Astrocyte of the cerebellum (primary cell): ENCODE measurements at regions of chr1 and their contacts with region 1.

Region 1: GRCh38 chr1:219544163-219544846 is 68.6 kb downstream of the ZC3H11B start:
- DNase-seq: no peak
- H3K4me3 ChIP-seq: no peak overlapping the region
- CTCF ChIP-seq: peak; percentile 12

Region 2: GRCh38 chr1:219385786-219386427 is 158.4 kb before region 1 on chr1:
- in situ Hi-C with region 1: loop called (anchors 10 kb)
- DNase-seq: peak; percentile 24
- H3K4me3 ChIP-seq: no peak overlapping the region
- CTCF ChIP-seq: peak; percentile 82

Region 3: GRCh38 chr1:219587805-219588561 is 43.7 kb after region 1 on chr1:
- in situ Hi-C with region 1: no loop called
- DNase-seq: no peak
- H3K4me3 ChIP-seq: no peak overlapping the region
- CTCF ChIP-seq: no peak

Region 4: GRCh38 chr1:219650880-219651279 is 106.6 kb after region 1 on chr1:
- in situ Hi-C with region 1: no loop called
- DNase-seq: peak; percentile 44
- H3K4me3 ChIP-seq: no peak overlapping the region
- CTCF ChIP-seq: no peak